ENCODE measurements at regions of chr3 and their contacts with region 1.

Region 1: DNA sequence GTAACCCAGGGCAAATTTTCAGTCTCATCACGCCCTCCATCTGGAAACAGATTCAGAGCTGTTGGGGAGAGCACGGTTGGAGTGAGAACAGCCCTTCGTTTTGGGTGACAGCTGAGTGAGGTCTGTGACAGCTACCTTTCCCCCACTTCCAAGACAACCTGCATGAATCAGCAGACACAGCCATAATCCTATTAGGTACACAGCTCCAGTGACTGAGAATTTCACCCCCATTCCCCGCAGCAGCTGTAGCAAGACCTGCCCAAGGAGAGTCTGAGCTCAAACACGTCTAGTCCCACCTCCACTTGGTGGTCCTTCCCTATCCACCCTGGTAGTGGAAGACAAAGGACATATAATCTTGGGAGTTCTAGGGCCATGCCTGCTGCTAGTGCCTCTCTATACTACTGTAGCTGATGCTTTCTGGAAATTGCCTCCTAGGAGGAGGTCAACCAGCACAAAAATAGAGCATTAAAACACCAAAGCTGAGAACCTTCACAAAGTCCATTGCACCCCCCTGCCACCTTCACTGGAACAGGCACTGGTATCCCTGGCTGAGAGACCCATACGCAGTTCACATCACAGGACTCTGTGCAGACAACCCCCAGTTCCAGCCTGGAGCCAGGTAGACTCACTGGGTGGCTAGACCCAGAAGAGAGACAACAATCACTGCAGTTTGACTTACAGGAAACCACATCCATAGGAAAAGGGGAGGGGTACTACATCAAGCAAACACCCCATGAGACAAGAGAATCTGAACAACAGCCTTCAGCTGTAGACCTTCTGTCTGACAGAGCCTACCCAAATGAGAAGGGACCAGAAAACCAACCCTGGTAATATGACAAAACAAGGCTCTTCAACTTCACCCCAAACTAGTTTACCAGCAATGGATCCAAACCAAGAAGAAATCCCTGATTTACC is 448.6 kb upstream of the CBLB start:
- DNase-seq: peak in 3 of 14 experiments; percentile 12 to 22 (median 19)
- ATAC-seq: peak; percentile 82
- H3K4me3 ChIP-seq: no peak overlapping the region
- H3K4me3 Mint-ChIP-seq: peak overlapping the region; percentile 30
- H3K27ac ChIP-seq: no peak overlapping the region
- H3K27ac Mint-ChIP-seq: peak overlapping the region; percentile 67
- H3K4me1 ChIP-seq: peaks cover 16% of the 10 kb centered on the region
- H3K4me1 Mint-ChIP-seq: peaks cover 37% of the 10 kb centered on the region
- H3K27me3 ChIP-seq: no peaks in the 10 kb centered on the region
- H3K27me3 Mint-ChIP-seq: no peaks in the 10 kb centered on the region
- CTCF ChIP-seq: no peak

Region 2: GRCh38 chr3:105984837-105985236 is 332.6 kb before region 1 on chr3:
- CTCF ChIA-PET with region 1: no interaction called
- POLR2A ChIA-PET with region 1: no interaction called
- intact Hi-C with region 1: no loop called
- DNase-seq: peak in 3 of 14 experiments; percentile 32 to 61 (median 47)
- ATAC-seq: peak; percentile 21
- H3K4me3 ChIP-seq: no peak overlapping the region
- H3K4me3 Mint-ChIP-seq: no peak overlapping the region
- H3K27ac ChIP-seq: no peak overlapping the region
- H3K27ac Mint-ChIP-seq: no peak overlapping the region
- H3K4me1 ChIP-seq: no peaks in the 10 kb centered on the region
- H3K4me1 Mint-ChIP-seq: peaks cover 40% of the 10 kb centered on the region
- H3K27me3 ChIP-seq: no peaks in the 10 kb centered on the region
- H3K27me3 Mint-ChIP-seq: no peaks in the 10 kb centered on the region
- CTCF ChIP-seq: no peak

Region 3: DNA sequence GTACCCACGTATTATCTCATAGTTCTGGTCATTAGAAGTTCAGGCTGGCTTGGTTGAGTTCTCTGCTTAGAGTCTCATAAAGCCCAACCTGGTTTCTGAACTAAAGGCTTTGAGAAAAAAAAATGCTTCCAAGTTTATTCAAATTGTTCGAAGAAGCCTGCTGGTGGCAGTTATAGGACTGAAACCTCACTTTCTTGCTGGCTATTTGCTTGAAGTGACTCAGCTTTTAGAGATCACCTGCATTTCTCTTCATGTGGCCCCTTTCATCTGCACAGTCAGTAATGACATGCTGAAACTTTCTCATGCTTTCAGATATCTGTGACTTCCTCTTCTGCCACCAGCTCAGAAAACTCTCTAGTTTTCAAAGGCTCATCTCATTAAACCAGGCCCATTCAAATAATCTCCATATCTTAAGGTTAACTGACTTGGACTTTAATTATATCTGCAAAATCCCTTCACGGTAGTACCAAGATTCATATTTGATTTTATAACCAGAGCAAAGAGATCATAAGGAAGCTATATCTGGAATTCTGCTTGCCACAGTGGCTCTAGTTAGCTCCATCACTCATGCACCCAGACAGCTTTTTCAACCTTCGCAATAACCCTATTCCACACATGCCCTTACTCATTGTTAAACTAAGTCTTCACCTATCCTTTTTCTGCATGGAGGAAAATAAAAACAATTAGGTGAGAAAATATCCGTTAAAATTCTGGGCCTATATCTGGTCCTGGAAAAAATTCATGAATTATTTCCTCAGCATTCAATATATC is 14.8 kb before region 1 on chr3:
- CTCF ChIA-PET with region 1: no interaction called
- POLR2A ChIA-PET with region 1: interaction called, 5 read pairs
- intact Hi-C with region 1: loop called in 1 of 2 experiments (anchors 2 kb)
- DNase-seq: peak in 5 of 14 experiments; percentile 6 to 50 (median 20)
- ATAC-seq: peak; percentile 71
- H3K4me3 ChIP-seq: no peak overlapping the region
- H3K4me3 Mint-ChIP-seq: no peak overlapping the region
- H3K27ac ChIP-seq: no peak overlapping the region
- H3K27ac Mint-ChIP-seq: no peak overlapping the region
- H3K4me1 ChIP-seq: no peaks in the 10 kb centered on the region
- H3K4me1 Mint-ChIP-seq: peaks cover 23% of the 10 kb centered on the region
- H3K27me3 ChIP-seq: no peaks in the 10 kb centered on the region
- H3K27me3 Mint-ChIP-seq: no peaks in the 10 kb centered on the region
- CTCF ChIP-seq: no peak

Region 4: DNA sequence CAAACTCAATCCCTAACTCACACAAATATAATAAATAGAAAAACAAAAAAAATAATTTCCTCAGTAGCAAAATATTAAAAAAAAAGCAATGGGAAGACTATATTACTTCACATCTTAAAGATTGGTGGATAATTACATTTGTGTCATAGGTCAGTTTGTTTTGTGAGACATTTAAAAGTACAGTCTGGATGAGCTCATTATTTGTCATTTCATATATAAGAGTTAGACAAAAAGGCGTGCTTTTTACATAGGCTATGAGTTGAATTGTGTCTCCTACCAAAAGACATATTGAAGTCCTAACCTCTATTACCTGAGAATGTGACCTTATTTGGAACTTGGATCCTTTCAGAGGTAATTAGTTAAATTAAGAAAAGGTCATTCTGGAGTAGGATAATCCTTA is 261.5 kb after region 1 on chr3:
- CTCF ChIA-PET with region 1: no interaction called
- POLR2A ChIA-PET with region 1: no interaction called
- intact Hi-C with region 1: no loop called
- DNase-seq: no peak
- ATAC-seq: no peak
- H3K4me3 ChIP-seq: no peak overlapping the region
- H3K4me3 Mint-ChIP-seq: no peak overlapping the region
- H3K27ac ChIP-seq: no peak overlapping the region
- H3K27ac Mint-ChIP-seq: no peak overlapping the region
- H3K4me1 ChIP-seq: no peaks in the 10 kb centered on the region
- H3K4me1 Mint-ChIP-seq: no peaks in the 10 kb centered on the region
- H3K27me3 ChIP-seq: no peaks in the 10 kb centered on the region
- H3K27me3 Mint-ChIP-seq: no peaks in the 10 kb centered on the region
- CTCF ChIP-seq: no peak